ENCODE measurements at regions of chr17 and their contacts with region 1.

Region 1: DNA sequence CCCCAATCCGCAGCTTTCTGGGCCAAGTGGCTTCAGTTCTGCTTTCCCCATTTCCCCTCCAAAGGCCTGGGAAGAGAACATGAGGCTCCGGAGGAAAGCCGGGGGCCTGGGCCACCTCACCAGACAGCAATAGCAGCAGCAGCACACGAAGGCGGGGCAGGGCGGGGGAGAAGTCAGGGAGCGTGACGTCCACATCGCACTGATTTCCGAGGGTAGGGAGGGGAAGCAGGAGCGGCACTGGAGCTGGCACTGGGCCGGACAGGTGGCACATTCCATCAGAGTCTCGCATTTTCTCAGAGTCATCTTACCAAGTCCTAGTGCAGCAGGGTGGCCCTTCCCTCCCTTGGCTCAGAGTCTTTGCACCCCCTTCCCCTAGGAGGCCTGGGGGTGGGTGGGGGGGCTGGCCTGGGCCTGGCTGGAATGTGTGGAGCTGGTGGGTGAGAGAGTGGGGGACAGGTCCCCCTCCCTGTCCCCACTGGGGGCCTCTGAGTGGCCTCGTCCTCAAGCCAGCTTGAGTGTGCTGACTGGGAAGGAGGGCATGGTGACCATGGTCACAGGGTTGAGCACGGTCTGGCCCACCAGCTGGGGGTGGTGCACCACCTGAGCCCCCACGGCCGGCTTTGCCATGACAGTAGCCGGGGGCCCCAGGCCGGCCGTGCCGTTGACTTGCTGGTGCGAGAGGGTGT is 14.3 kb downstream of the MNT start:
- DNase-seq: no peak
- H3K4me3 ChIP-seq: no peak overlapping the region
- H3K27ac ChIP-seq: no peak overlapping the region
- H3K4me1 ChIP-seq: peaks cover 1 to 36% (median 18%) of the 10 kb centered on the region in 4 donors
- H3K27me3 ChIP-seq: no peaks in the 10 kb centered on the region
- CTCF ChIP-seq: no peak

Region 2: DNA sequence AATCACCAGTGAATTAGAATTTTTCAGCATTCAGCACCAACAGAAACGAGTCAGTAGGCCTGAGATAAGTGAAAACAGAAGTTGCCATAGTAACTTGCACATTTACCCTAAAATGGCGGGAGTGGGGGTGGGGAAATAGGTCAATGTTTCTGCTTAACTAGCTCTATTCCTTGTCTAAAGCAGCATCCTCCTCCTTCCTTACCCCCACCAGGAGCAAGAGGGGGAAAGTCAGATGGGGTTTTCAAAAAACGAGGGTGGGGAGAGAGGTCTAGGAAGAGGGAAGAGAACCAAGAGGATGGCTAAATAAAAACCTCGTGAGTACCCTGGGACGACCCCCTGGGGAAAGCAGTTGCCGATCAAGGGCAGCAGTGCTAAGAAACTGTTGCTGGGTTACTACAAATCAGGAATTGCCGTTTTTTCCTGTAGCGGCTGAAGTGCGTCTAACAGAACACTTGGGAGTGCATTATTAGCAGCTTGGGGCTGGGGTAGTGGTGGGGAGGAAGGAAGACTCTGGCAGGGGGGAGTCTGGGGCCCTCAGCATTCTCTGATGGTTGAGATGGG is 48.7 kb after region 1 on chr17:
- intact Hi-C with region 1: no loop called
- DNase-seq: no peak
- H3K4me3 ChIP-seq: no peak overlapping the region
- H3K27ac ChIP-seq: no peak overlapping the region
- H3K4me1 ChIP-seq: no peaks in the 10 kb centered on the region
- H3K27me3 ChIP-seq: no peaks in the 10 kb centered on the region
- CTCF ChIP-seq: no peak

Region 3: DNA sequence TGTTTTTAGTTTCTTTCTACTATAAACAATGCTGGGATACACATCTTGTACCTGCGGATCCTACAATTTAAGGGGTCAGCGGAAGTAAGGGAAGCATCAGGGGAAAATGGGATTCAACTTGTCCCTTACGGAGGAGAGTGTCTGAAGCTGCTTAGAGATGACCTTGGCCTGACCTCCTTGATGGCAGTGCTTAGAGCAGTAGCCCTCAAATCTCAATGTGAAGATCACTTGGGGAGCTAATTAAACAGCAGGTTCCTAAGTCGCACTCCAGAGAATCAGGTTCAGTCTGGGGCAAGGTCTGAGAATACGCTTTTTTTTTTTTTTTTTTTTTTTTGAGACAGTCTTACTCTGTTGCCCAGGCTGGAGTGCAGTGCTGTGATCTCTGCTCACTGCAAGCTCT is 134.7 kb after region 1 on chr17:
- intact Hi-C with region 1: no loop called
- DNase-seq: no peak
- H3K4me3 ChIP-seq: no peak overlapping the region
- H3K27ac ChIP-seq: no peak overlapping the region
- H3K4me1 ChIP-seq: no peaks in the 10 kb centered on the region
- H3K27me3 ChIP-seq: no peaks in the 10 kb centered on the region
- CTCF ChIP-seq: no peak

Region 4: GRCh38 chr17:2551493-2551892 is 164.9 kb after region 1 on chr17:
- intact Hi-C with region 1: no loop called
- DNase-seq: no peak
- H3K4me3 ChIP-seq: no peak overlapping the region
- H3K27ac ChIP-seq: no peak overlapping the region
- H3K4me1 ChIP-seq: no peaks in the 10 kb centered on the region
- H3K27me3 ChIP-seq: peaks cover 0 to 22% of the 10 kb centered on the region in 2 donors
- CTCF ChIP-seq: no peak

Region 5: DNA sequence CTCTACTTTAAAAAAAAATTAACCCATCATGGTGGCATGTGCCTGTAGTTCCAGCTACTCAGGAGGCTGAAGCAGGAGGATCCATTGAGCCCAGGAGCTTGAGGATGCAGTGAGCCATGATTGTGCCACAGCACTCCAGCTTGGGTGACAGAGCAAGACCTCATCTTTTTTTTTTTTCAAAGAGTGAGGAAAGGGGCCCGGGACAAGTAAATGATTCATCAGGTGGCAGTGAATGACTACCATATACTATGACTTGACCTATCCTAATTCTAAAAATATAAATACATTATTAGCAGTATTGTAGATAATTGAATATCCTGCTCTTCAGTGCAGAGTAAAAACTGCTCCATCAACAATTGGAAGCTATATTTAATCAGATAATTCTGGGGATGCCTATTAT is 269.7 kb after region 1 on chr17:
- intact Hi-C with region 1: loop called (anchors 10 kb)
- DNase-seq: no peak
- H3K4me3 ChIP-seq: no peak overlapping the region
- H3K27ac ChIP-seq: no peak overlapping the region
- H3K4me1 ChIP-seq: peaks cover 0 to 45% (median 7%) of the 10 kb centered on the region in 4 donors
- H3K27me3 ChIP-seq: no peaks in the 10 kb centered on the region
- CTCF ChIP-seq: no peak

Measured in tibial artery (tissue), 4 donors.